ENCODE measurements at regions of chr22 and their contacts with region 1.

Region 1: GRCh38 chr22:30386960-30387827 is at the start of gene RNF215:
- DNase-seq: peak; percentile 78 to 92 (median 85)
- ATAC-seq: peak; percentile 68 to 94 (median 92)
- H3K4me3 ChIP-seq: peak within 1 kb of the TSS; percentile 11 to 88 (median 62)
- H3K27ac ChIP-seq: peak within 1 kb of the TSS in 10 of 12 donors; percentile 53 to 85 (median 67)
- H3K4me1 ChIP-seq: peaks cover 0 to 24% (median 9%) of the 10 kb centered on the region in 12 donors
- H3K27me3 ChIP-seq: no peaks in the 10 kb centered on the region
- CTCF ChIP-seq: peak; percentile 81 to 99 (median 94)
- POLR2A ChIP-seq: no peak
- total RNA-seq, gene RNF215: 3.3 to 12.2 (median 6.7) TPM

Region 2: GRCh38 chr22:30114361-30114760 is 272.8 kb before region 1 on chr22:
- intact Hi-C with region 1: loop called (anchors 2 to 5 kb)
- DNase-seq: no peak
- ATAC-seq: no peak
- H3K4me3 ChIP-seq: no peak overlapping the region
- H3K27ac ChIP-seq: no peak overlapping the region
- H3K4me1 ChIP-seq: no peaks in the 10 kb centered on the region
- H3K27me3 ChIP-seq: peaks cover 0 to 6% (median 0%) of the 10 kb centered on the region in 9 donors
- CTCF ChIP-seq: no peak
- POLR2A ChIP-seq: no peak

Region 3: GRCh38 chr22:30262917-30263741 is 124.1 kb before region 1 on chr22:
- intact Hi-C with region 1: loop called in 9 of 10 experiments (anchors 1 to 2 kb)
- DNase-seq: peak; percentile 68 to 87 (median 72)
- ATAC-seq: peak in 2 of 4 donors; percentile 49 to 53
- H3K4me3 ChIP-seq: peak overlapping the region in 6 of 12 donors; percentile 3 to 32 (median 11)
- H3K27ac ChIP-seq: peak overlapping the region in 1 of 12 donors; percentile 32
- H3K4me1 ChIP-seq: peaks cover 0 to 43% (median 0%) of the 10 kb centered on the region in 12 donors
- H3K27me3 ChIP-seq: peaks cover 0 to 12% (median 0%) of the 10 kb centered on the region in 9 donors
- CTCF ChIP-seq: peak; percentile 89 to 99 (median 97)
- POLR2A ChIP-seq: no peak

Region 4: GRCh38 chr22:30326706-30327362 is 60.4 kb before region 1 on chr22 and contains the start of gene TBC1D10A:
- intact Hi-C with region 1: loop called in 2 of 10 experiments (anchors 2 to 5 kb)
- DNase-seq: peak; percentile 91 to 95 (median 92)
- ATAC-seq: peak; percentile 87 to 97 (median 93)
- H3K4me3 ChIP-seq: peak within 1 kb of the TSS; percentile 64 to 100 (median 94)
- H3K27ac ChIP-seq: peak within 1 kb of the TSS; percentile 48 to 95 (median 88)
- H3K4me1 ChIP-seq: peaks cover under 1 to 51% (median 37%) of the 10 kb centered on the region in 12 donors
- H3K27me3 ChIP-seq: no peaks in the 10 kb centered on the region
- CTCF ChIP-seq: no peak
- POLR2A ChIP-seq: peak in 1 of 2 donors; percentile 96
- total RNA-seq, gene TBC1D10A: 4.3 to 10.1 (median 7.1) TPM

Region 5: GRCh38 chr22:30485362-30485988 is 98.3 kb after region 1 on chr22:
- intact Hi-C with region 1: loop called in 9 of 10 experiments (anchors 1 to 5 kb)
- DNase-seq: peak; percentile 34 to 74 (median 60)
- ATAC-seq: peak in 3 of 4 donors; percentile 83 to 96 (median 87)
- H3K4me3 ChIP-seq: no peak overlapping the region
- H3K27ac ChIP-seq: no peak overlapping the region
- H3K4me1 ChIP-seq: no peaks in the 10 kb centered on the region
- H3K27me3 ChIP-seq: peaks cover 0 to 9% (median 0%) of the 10 kb centered on the region in 9 donors
- CTCF ChIP-seq: peak; percentile 85 to 99 (median 94)
- POLR2A ChIP-seq: no peak